Right ventricle myocardium inferior (tissue), 1 donor: ENCODE measurements at regions of chr5 and their contacts with region 1.

Region 1: DNA sequence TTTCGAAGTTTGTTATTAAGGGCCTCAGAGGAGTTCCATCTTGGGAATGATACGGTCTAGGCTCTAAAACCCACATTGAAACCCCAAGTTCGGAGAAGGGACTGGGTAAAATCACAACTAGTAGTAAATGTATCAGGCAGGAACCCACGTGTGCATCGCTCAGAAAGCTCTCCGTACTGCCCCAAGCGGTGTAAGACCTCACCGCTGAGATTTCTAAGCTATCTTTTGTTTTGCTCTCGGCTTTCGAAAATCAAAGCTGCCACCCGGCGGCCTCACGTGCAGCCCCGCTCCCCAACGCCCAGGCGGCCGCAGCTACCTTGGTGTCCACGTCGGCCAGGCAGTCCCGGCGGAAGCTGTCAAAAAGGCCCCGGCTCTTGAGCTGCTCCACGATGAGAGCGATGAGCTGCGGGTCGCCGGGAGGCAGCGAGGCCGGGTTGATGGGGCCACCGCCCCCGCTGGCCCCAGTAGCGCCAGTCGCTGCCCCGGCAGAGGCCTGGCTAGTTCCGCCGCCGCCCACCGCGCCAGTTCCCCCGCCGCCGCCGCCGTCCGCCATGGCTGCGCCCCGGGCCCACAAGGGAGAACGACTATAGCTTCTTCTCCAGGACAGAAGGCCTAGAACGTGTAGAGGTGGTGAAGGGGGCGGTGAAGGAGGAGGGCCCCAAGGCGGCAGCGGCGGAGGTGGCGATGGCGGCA is 420 bp downstream of the BOD1 start:
- DNase-seq: no peak
- ATAC-seq: peak; percentile 60

Region 2: GRCh38 chr5:173399851-173400250 is 216.2 kb before region 1 on chr5:
- intact Hi-C with region 1: no loop called
- DNase-seq: no peak
- ATAC-seq: no peak

Region 3: GRCh38 chr5:173592050-173592669 is 23.9 kb before region 1 on chr5:
- intact Hi-C with region 1: no loop called
- DNase-seq: no peak
- ATAC-seq: no peak

Region 4: DNA sequence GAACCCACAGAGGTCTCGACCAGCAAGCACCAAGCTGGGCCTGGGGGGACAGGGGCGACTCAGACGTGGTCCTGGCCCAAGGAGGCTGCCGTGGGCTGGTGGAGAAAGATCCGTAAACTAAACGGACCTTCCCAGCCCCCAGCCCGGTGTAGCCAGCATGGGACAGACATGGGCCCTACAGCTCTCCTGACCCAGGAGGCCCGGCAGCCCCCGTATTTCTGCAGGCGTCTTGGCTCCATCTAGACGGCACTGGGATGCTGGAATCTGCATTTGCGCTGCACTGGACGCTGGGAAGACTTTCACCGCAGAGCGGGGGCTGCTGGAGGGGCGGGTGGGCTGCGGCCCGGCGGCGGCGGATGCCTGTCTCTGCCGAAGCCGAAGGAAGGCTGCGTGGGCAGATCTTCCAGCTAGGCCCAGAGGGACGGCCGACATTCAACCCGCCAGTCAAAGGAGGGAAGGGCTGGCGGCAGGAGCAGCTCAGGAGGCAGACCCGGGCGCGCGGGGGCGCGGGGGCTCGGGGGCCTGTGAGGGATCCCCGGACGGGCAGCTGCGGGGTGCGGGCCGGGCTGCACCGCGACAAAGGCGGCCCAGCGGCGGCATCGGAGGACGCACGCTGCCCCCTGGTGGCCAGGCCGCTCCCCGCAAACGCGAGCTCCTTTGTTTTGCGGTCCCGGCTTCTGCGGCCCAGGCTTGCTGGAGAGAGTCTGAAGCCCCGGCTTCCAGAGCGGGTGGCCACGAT is 695.7 kb after region 1 on chr5:
- intact Hi-C with region 1: loop called (anchors 5 kb)
- DNase-seq: peak; percentile 83
- ATAC-seq: peak; percentile 74